Calu3 (cell line): ENCODE measurements at regions of chr12 and their contacts with region 1.

Region 1: DNA sequence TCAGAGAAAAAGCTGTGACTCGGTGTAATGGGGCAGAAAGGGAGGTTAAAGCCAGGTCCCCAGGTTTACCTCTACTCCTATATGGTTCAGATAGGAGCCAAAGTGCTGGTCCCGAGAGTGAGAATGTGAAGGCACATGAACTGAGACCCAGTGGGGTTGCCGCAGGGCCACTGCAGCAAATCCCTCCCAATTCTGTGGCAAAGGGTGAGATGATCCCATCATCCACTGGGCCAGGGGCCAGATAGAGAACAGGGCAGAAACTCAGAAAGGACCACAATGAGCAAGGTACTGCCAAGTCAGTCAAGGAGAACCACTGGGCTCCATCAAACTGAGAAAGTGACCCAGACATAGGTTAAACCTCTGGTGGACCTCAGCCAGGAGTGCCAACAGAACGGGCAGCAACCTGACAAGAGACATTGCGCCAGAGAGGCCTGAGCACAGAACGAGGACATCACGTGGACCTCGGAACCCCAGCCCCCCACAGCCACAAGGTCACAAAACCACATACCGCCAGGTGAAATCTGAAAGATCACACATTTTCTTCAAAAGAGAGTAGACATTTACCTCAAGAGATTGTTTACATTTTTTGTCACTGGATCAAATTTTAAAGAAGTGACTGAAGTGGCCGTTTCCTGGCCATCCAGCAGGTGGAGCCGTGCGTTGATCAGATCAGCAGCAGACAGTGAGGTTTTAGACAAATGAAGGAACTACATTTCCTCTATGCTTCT is 20.5 kb upstream of the ITPR2 start:
- DNase-seq: peak; percentile 66
- H3K4me3 Mint-ChIP-seq: no peak overlapping the region
- H3K27ac Mint-ChIP-seq: no peak overlapping the region
- H3K4me1 Mint-ChIP-seq: no peaks in the 10 kb centered on the region
- H3K27me3 Mint-ChIP-seq: no peaks in the 10 kb centered on the region
- CTCF ChIP-seq: peak; percentile 75

Region 2: GRCh38 chr12:26884765-26885576 is 31.5 kb after region 1 on chr12:
- CTCF ChIA-PET with region 1: interaction called, 3 read pairs
- intact Hi-C with region 1: loop called (anchors 1 kb)
- DNase-seq: peak; percentile 90
- H3K4me3 Mint-ChIP-seq: peak overlapping the region; percentile 0
- H3K27ac Mint-ChIP-seq: no peak overlapping the region
- H3K4me1 Mint-ChIP-seq: peaks cover 16% of the 10 kb centered on the region
- H3K27me3 Mint-ChIP-seq: peaks cover 18% of the 10 kb centered on the region
- CTCF ChIP-seq: peak; percentile 82

Region 3: GRCh38 chr12:27305673-27306456 is 452.4 kb after region 1 on chr12:
- CTCF ChIA-PET with region 1: interaction called, 3 read pairs
- intact Hi-C with region 1: loop called (anchors 5 kb)
- DNase-seq: no peak
- H3K4me3 Mint-ChIP-seq: no peak overlapping the region
- H3K27ac Mint-ChIP-seq: no peak overlapping the region
- H3K4me1 Mint-ChIP-seq: peaks cover 9% of the 10 kb centered on the region
- H3K27me3 Mint-ChIP-seq: no peaks in the 10 kb centered on the region
- CTCF ChIP-seq: peak; percentile 35